ENCODE measurements at regions of chr6 and their contacts with region 1.

Region 1: GRCh38 chr6:14876778-14877613 is 368.9 kb upstream of the JARID2 start:
- DNase-seq: peak; percentile 22
- H3K4me3 Mint-ChIP-seq: peak overlapping the region; percentile 60
- H3K27ac Mint-ChIP-seq: peak overlapping the region; percentile 91
- H3K4me1 Mint-ChIP-seq: peaks cover 65% of the 10 kb centered on the region
- H3K27me3 Mint-ChIP-seq: no peaks in the 10 kb centered on the region

Region 2: DNA sequence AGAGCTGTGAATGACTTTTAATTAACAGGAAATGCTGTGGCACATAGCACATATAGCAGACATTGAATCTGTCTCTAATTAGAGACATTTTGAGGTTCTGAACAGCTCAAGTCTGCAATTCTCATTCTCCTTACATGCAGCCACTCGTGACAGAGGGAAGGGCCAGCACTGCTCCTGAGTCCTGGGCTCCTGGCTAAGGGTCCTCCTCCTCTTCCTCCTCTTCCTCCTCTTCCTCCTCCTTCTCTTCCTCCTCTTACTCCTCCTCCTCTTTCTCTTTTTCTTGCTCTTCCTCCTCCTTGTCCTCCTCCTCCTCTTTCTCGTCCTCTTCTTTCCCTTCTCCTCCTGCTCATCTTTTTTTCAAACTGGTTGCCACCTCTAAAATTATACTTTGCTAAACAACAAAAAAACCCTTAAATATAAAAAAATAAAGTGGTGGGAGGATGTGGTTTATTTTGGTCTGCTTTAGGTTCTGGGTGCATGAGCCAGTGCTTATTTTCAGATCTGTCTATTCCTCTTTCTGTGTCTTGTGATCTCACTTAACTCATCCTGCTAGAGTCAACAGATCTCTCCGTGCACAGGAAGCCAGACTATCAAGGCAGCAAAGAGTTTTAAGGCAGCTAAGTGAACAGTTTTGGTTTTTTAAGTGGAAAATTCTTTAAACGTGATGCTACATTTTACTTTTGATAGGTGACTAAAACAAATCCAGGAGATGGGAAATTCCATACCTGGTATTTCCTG is 600.2 kb before region 1 on chr6:
- intact Hi-C with region 1: loop called (anchors 10 kb)
- DNase-seq: peak; percentile 35
- H3K4me3 Mint-ChIP-seq: peak overlapping the region; percentile 22
- H3K27ac Mint-ChIP-seq: peak overlapping the region; percentile 92
- H3K4me1 Mint-ChIP-seq: peaks cover 49% of the 10 kb centered on the region
- H3K27me3 Mint-ChIP-seq: no peaks in the 10 kb centered on the region

Region 3: DNA sequence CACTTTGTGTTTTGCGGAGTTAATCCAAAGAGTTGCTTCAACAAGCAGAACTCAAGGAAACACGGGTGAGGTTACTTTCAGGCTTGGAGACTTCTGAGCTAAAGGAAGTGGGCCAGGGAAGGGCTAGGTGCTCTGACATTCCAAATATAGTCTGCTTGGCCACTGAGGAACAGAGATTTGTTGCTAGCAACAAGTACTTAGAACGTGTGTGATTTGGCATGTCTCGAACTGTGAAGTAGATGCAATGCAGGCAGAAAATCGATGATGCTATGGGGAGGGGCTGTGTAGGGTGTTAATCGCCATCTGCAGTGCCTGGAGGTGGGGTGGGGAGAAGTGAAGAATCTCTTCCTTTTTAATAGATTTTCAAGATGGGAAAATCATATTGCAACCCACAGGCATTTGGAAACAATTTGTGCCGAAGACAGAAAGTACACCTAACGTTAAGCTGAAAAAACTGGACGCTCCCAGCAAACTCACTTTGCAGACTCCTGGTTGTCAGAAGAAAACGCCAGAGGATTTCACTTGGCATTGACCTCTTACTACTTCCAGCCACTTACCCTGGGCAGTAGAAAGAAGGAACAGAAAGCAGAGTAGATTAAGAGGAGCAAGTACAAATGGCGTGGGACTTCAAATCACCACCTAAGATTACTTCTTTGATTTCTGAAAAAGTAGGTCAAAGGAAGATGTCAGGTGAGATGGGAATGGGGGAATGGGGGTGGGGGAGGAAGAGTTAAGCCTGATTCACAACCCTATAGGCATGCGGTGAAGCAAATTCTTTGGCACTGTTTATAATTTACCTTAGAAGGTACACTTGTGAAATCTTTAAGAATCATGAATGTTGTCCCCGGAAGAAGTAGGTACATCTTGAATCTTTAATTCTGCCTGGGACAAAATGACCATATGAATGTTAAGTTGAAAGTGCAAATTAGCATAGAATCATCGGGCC is 445.3 kb before region 1 on chr6:
- intact Hi-C with region 1: no loop called
- DNase-seq: no peak
- H3K4me3 Mint-ChIP-seq: no peak overlapping the region
- H3K27ac Mint-ChIP-seq: no peak overlapping the region
- H3K4me1 Mint-ChIP-seq: peaks cover 15% of the 10 kb centered on the region
- H3K27me3 Mint-ChIP-seq: no peaks in the 10 kb centered on the region

Region 4: DNA sequence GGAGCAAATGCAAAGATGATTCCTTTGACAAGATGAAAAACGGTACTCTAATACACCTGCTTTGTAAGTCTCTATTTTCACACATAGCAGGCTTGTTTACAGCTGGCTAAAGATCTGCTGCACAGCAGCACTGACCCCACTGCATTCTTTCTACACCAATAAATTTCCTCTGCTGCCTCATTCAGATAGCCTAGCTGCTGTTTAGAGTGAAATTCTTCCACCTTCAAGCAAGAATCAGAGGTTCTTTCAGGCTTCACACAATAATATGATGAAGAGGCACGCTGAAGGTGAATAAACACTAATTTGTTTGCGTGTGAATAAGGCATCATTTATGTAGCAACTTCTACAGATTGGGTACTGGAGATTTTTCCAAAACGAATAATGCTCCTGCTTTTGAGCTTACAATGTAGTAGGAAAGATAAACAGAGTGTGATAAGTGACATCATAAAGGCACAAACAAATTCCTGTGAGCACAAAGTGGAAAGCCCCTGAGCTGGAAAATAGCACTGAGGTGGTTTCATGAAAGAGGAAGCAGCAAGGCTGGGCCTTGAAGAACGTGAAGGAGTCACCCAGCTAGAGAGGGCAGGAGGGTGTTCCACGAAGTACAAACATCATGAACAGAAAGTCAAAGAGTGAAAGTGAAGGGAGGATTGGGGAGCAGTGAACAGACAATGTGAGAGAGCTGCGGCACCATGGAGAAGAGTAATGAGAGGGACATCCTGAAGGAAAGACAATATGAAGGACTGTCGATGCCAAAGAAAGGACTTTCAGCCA is 216.0 kb before region 1 on chr6:
- intact Hi-C with region 1: loop called (anchors 5 kb)
- DNase-seq: peak; percentile 52
- H3K4me3 Mint-ChIP-seq: no peak overlapping the region
- H3K27ac Mint-ChIP-seq: no peak overlapping the region
- H3K4me1 Mint-ChIP-seq: peaks cover 35% of the 10 kb centered on the region
- H3K27me3 Mint-ChIP-seq: no peaks in the 10 kb centered on the region

Region 5: DNA sequence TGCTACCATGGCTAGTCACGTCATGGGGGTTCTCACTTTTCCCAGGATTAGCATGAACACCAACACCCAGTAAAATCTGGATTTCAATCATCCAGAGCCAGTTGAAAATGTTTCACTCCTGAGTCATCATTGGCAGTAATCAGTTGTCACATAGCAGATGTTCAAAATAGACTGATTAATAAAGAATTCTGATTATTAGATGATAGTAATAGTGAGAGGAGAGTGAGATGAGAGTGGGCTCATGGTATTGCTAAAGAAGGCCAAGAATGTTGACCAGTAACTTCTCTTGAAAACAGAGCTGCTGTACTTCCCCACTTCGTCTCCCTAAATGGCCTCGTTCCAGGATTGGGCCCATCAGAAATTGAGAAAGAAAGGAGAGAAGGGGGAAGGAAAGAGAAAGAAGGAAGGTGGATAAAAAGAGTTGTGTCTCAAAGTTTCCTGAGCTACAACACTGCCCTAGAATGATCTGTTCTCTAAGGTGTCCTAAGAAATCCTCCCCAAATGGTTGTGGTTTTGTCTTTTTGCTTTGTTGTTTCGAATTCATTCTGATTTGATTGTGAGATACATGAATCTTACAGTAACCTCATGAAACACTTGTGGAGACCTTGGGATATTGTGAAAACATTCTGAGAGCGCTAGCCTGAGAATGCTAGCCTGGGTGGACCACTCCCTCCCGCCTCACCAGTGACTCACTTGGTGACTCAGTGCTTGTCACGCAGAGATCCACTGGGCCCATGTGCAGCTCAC is 133.4 kb before region 1 on chr6:
- intact Hi-C with region 1: loop called (anchors 1 kb)
- DNase-seq: peak; percentile 73
- H3K4me3 Mint-ChIP-seq: peak overlapping the region; percentile 61
- H3K27ac Mint-ChIP-seq: peak overlapping the region; percentile 100
- H3K4me1 Mint-ChIP-seq: peaks cover 79% of the 10 kb centered on the region
- H3K27me3 Mint-ChIP-seq: no peaks in the 10 kb centered on the region

Region 6: GRCh38 chr6:15017803-15018202 is 140.8 kb after region 1 on chr6:
- intact Hi-C with region 1: loop called (anchors 1 kb)
- DNase-seq: no peak
- H3K4me3 Mint-ChIP-seq: no peak overlapping the region
- H3K27ac Mint-ChIP-seq: peak overlapping the region; percentile 62
- H3K4me1 Mint-ChIP-seq: peaks cover 35% of the 10 kb centered on the region
- H3K27me3 Mint-ChIP-seq: peaks cover 2% of the 10 kb centered on the region

Region 7: GRCh38 chr6:15184441-15184861 is 307.5 kb after region 1 on chr6:
- intact Hi-C with region 1: loop called (anchors 1 kb)
- DNase-seq: no peak
- H3K4me3 Mint-ChIP-seq: no peak overlapping the region
- H3K27ac Mint-ChIP-seq: peak overlapping the region; percentile 90
- H3K4me1 Mint-ChIP-seq: peaks cover 12% of the 10 kb centered on the region
- H3K27me3 Mint-ChIP-seq: no peaks in the 10 kb centered on the region

Region 8: DNA sequence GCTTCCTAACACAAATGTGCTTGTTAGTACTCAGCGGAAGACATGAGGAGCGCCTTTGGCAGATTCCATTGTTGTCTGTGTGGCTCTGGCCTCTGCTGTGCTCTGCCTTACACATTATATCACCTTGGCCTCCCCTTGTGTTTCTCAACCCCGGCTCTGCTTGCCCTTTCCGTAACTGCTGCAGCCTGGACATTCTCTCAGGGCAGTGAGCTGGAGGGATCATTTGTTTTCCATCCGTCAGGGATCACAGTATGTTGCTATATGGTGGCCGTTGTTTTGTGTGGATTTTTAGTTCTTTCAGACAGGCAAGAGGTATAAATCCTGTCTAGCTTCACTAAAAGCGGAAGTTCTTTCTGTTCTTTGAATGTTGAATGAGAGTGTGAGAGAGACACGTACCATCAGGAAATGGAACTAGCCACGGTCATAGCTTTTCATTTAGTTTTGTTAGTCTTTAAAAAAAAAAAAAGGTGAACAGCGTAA is 544.0 kb after region 1 on chr6:
- intact Hi-C with region 1: loop called (anchors 10 kb)
- DNase-seq: no peak
- H3K4me3 Mint-ChIP-seq: peak overlapping the region; percentile 53
- H3K27ac Mint-ChIP-seq: peak overlapping the region; percentile 89
- H3K4me1 Mint-ChIP-seq: peaks cover 68% of the 10 kb centered on the region
- H3K27me3 Mint-ChIP-seq: no peaks in the 10 kb centered on the region

Measured in activated T-helper 2 cell treated with anti-CD3 and anti-CD28 coated beads, Interferon-gamma antibody, Interleukin-2, Interleukin-4, amounts not matched to agents 10 μg/mL and 5 μg/mL and 100 μg/mL, durations not matched to agents 14 hours and 24 hours and 36 hours (primary cell).